CD4-positive, alpha-beta memory T cell (primary cell): ENCODE measurements at regions of chr2 and their contacts with region 1.

Region 1: DNA sequence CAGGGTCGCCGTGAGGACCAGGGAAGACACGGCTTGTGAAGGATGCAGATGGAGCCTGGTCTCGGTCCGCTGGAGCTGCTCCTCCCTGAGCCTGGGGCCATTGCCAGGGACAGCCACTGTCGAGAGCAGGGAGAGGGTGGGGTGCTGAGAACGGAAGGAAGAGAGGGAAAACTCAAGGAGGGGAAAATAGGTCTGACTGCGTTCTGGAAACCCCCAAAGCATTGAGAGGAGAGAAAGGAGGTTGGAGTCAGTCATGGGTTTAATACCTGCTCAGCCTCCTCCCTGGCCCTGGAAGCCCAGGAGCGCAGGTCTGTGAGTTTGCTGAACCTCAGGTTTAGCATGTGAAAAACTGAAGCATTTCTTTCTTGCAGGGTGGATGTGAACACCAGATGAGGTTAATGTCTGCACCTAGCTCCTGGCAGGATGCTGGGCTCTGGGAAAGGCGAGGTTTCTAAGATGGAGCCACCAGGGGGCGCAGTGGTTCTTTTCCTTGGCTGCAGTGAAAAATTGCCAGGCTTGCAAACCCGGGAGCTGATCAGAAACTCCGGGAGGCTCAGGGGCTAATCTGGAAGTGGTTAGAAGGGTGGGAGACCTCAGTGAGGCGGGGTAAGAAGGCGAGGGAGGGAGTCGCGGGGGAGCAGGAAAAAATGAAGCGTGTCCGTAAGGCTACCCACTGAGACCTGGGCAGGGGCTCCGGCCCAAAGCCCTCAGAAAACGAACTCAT is 33.6 kb upstream of the RNF149 start:
- DNase-seq: peak; percentile 59 to 66 (median 62)
- H3K4me3 ChIP-seq: no peak overlapping the region
- H3K4me3 Mint-ChIP-seq: peak overlapping the region in 4 of 8 donors; percentile 21 to 58 (median 34)
- H3K27ac ChIP-seq: no peak overlapping the region
- H3K27ac Mint-ChIP-seq: peak overlapping the region in 5 of 7 donors; percentile 25 to 75 (median 65)
- H3K4me1 ChIP-seq: peaks cover 26% of the 10 kb centered on the region
- H3K4me1 Mint-ChIP-seq: peaks cover 21 to 33% (median 29%) of the 10 kb centered on the region in 4 donors
- H3K27me3 ChIP-seq: no peaks in the 10 kb centered on the region
- H3K27me3 Mint-ChIP-seq: no peaks in the 10 kb centered on the region

Region 2: GRCh38 chr2:101296371-101296770 is 45.7 kb before region 1 on chr2:
- CTCF ChIA-PET with region 1: interaction called, 25 read pairs
- POLR2A ChIA-PET with region 1: interaction called, 3 read pairs
- intact Hi-C with region 1: no loop called
- DNase-seq: no peak
- H3K4me3 ChIP-seq: no peak overlapping the region
- H3K4me3 Mint-ChIP-seq: peak overlapping the region in 7 of 8 donors; percentile 26 to 81 (median 37)
- H3K27ac ChIP-seq: no peak overlapping the region
- H3K27ac Mint-ChIP-seq: peak overlapping the region in 5 of 7 donors; percentile 29 to 96 (median 77)
- H3K4me1 ChIP-seq: peaks cover 73% of the 10 kb centered on the region
- H3K4me1 Mint-ChIP-seq: peaks cover 50 to 92% (median 60%) of the 10 kb centered on the region in 4 donors
- H3K27me3 ChIP-seq: no peaks in the 10 kb centered on the region
- H3K27me3 Mint-ChIP-seq: no peaks in the 10 kb centered on the region

Region 3: GRCh38 chr2:101355419-101356125 is 13.5 kb after region 1 on chr2:
- CTCF ChIA-PET with region 1: interaction called, 96 read pairs
- POLR2A ChIA-PET with region 1: interaction called, 12 read pairs
- intact Hi-C with region 1: no loop called
- DNase-seq: no peak
- H3K4me3 ChIP-seq: no peak overlapping the region
- H3K4me3 Mint-ChIP-seq: no peak overlapping the region
- H3K27ac ChIP-seq: no peak overlapping the region
- H3K27ac Mint-ChIP-seq: peak overlapping the region in 2 of 7 donors; percentile 22 to 44
- H3K4me1 ChIP-seq: peaks cover 11% of the 10 kb centered on the region
- H3K4me1 Mint-ChIP-seq: peaks cover 7 to 27% (median 12%) of the 10 kb centered on the region in 4 donors
- H3K27me3 ChIP-seq: no peaks in the 10 kb centered on the region
- H3K27me3 Mint-ChIP-seq: no peaks in the 10 kb centered on the region